Activated T-helper 1 cell treated with anti-CD3 and anti-CD28 coated beads, Interleukin-12 subunit alpha, Interleukin-12 subunit beta, Interleukin-2, Interleukin-4 antibody, amounts not matched to agents 30 ng/mL and 10 ng/mL and 1 ng/mL, durations not matched to agents 14 hours and 24 hours and 36 hours (primary cell): ENCODE measurements at regions of chr3 and their contacts with region 1.

Region 1: DNA sequence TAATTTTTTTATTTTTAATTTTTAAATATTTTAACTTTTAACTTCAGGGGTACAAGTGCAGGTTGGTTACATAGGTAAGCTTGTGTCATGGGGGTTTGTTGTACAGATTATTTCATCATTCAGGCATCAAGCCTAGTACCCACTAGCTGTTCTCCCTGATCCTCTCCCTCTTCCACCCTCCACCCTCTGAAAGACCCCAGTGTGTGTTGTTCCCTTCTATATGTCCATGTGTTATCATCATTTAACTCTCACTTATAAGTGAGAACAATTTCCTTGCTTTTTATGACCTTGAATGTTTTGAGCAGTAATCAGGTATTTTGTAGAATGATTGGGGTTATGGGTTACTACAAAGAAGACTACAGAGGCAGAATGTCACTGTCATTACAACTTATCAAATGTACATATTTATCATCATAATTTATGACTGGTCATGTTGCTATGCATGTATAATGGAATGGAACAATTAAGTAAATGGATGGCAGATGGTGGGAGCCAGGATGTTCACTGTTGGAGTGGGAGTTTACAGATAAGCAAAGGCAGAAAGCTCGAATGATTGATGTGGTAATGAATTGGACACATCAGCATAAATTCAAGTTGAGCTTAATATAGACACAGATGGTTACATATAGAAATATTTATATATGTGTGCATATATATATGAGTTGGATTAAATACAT is 563.8 kb upstream of the ROBO1 start:
- DNase-seq: no peak
- H3K4me3 Mint-ChIP-seq: no peak overlapping the region
- H3K27ac Mint-ChIP-seq: no peak overlapping the region
- H3K4me1 Mint-ChIP-seq: no peaks in the 10 kb centered on the region
- H3K27me3 Mint-ChIP-seq: no peaks in the 10 kb centered on the region

Region 2: GRCh38 chr3:80087767-80088166 is 243.9 kb before region 1 on chr3:
- intact Hi-C with region 1: no loop called
- DNase-seq: no peak
- H3K4me3 Mint-ChIP-seq: no peak overlapping the region
- H3K27ac Mint-ChIP-seq: no peak overlapping the region
- H3K4me1 Mint-ChIP-seq: no peaks in the 10 kb centered on the region
- H3K27me3 Mint-ChIP-seq: no peaks in the 10 kb centered on the region

Region 3: GRCh38 chr3:80285388-80285787 is 46.2 kb before region 1 on chr3:
- intact Hi-C with region 1: loop called (anchors 2 kb)
- DNase-seq: no peak
- H3K4me3 Mint-ChIP-seq: no peak overlapping the region
- H3K27ac Mint-ChIP-seq: no peak overlapping the region
- H3K4me1 Mint-ChIP-seq: no peaks in the 10 kb centered on the region
- H3K27me3 Mint-ChIP-seq: no peaks in the 10 kb centered on the region

Region 4: DNA sequence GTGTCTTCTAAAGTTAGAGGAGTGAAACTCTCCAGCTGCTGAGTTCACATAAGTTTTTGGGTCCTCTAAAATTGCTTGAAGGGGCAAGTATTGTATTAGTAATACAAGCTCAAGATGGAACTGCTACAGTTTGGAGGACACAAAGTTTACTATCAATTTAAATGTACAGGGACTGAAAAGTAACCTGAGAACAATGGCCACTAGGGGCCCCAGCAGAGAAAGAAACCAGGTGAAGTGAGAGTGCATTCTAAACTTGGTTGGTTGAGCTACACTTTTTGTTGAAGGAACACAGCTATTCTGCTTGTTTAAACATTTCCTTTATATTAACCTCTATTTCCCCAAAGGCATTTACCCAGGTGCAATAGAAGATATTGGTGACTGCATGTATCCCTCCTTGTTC is 674.4 kb after region 1 on chr3:
- intact Hi-C with region 1: no loop called
- DNase-seq: no peak
- H3K4me3 Mint-ChIP-seq: no peak overlapping the region
- H3K27ac Mint-ChIP-seq: no peak overlapping the region
- H3K4me1 Mint-ChIP-seq: no peaks in the 10 kb centered on the region
- H3K27me3 Mint-ChIP-seq: no peaks in the 10 kb centered on the region